Calu3 (cell line): ENCODE measurements at regions of chr16 and their contacts with region 1.

Region 1: DNA sequence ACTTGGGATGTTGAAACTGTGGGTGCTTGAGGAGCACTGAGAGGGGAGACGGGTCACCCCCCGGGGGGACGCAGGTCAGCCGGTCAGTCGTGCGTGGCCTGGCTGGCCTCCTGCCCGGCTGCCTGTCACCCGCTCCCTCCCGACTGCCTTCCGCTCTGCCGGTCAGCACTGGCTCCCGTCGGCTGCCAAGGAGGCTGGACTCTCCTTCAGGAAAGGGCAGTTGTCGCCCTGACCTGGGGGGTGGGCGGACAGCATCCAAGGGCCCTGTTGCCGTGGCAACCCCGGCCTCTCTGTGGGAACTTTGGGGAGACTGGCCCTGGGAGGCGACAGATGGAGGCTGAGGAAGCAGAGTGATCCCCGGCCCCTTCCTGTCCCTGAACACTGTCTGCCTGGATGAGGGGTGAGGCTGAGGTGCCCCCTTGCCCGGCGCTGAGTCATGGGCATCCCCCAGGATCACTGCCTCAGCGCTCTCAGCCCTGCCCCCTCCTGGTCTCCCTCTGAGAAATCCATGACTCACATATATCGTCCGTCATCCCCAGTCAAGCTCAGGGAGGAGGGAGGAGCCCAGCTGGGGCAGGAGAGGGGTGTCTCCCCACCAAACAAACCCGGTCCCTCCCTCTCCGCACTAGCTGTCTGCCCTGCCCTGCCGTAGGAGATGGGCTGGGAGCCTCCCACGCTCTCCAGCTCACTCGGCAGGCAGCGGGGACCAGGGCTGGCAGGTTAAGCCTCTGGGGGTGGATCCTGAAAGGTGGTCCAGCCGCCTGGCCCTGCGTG is at the start of gene ADGRG1:
- DNase-seq: peak; percentile 90
- H3K4me3 Mint-ChIP-seq: peak within 1 kb of the TSS; percentile 67
- H3K27ac Mint-ChIP-seq: peak within 1 kb of the TSS; percentile 73
- H3K4me1 Mint-ChIP-seq: peaks cover 74% of the 10 kb centered on the region
- H3K27me3 Mint-ChIP-seq: no peaks in the 10 kb centered on the region
- CTCF ChIP-seq: peak; percentile 30
- total RNA-seq, gene ADGRG1: 269 and 278 TPM in 2 replicates

Region 2: GRCh38 chr16:57383276-57384247 is 244.6 kb before region 1 on chr16:
- CTCF ChIA-PET with region 1: no interaction called
- intact Hi-C with region 1: no loop called
- DNase-seq: peak; percentile 49
- H3K4me3 Mint-ChIP-seq: no peak overlapping the region
- H3K27ac Mint-ChIP-seq: peak overlapping the region; percentile 32
- H3K4me1 Mint-ChIP-seq: peaks cover 66% of the 10 kb centered on the region
- H3K27me3 Mint-ChIP-seq: no peaks in the 10 kb centered on the region
- CTCF ChIP-seq: no peak

Region 3: GRCh38 chr16:57600048-57600835 is 28.0 kb before region 1 on chr16:
- CTCF ChIA-PET with region 1: interaction called, 10 read pairs
- intact Hi-C with region 1: loop called (anchors 1 kb)
- DNase-seq: peak; percentile 88
- H3K4me3 Mint-ChIP-seq: no peak overlapping the region
- H3K27ac Mint-ChIP-seq: no peak overlapping the region
- H3K4me1 Mint-ChIP-seq: no peaks in the 10 kb centered on the region
- H3K27me3 Mint-ChIP-seq: peaks cover 14% of the 10 kb centered on the region
- CTCF ChIP-seq: peak; percentile 94

Region 4: DNA sequence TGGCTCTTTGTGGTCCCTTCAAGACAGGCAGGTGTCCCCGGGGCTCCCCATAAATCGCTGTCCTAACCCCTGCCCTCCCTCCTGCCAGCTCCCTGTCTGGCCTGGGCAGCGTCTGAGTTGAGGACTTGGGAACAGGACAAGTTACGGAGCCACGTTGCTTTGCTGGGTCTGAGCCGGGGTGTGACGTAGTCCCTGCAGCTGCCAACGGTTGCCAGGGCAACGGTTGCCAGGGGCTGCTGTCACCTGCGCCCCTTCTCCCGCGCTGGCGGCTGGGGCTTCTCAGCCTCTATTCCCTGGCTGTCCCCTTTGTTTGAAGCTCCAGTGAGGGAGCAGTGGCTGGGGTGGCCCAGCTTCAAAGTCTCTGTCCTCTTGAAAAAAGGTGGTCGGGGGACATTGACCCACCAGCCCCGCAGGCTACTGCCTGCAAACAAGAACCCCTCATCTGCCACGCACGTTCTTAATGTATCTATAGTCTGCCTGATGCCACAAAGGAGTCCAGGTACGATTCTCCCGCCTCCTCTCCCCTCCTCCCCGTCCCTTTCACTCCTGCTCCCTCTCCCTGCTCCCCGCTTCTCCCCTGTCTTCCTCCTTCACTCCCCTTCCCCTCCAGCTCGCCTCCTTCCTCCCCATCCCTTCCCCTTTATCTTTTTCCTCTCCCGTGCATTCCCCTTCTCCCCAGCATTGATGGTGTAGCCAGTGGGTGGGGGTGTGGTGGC is 11.1 kb after region 1 on chr16:
- CTCF ChIA-PET with region 1: interaction called, 10 read pairs
- intact Hi-C with region 1: no loop called
- DNase-seq: no peak
- H3K4me3 Mint-ChIP-seq: no peak overlapping the region
- H3K27ac Mint-ChIP-seq: no peak overlapping the region
- H3K4me1 Mint-ChIP-seq: peaks cover 36% of the 10 kb centered on the region
- H3K27me3 Mint-ChIP-seq: no peaks in the 10 kb centered on the region
- CTCF ChIP-seq: no peak

Region 5: DNA sequence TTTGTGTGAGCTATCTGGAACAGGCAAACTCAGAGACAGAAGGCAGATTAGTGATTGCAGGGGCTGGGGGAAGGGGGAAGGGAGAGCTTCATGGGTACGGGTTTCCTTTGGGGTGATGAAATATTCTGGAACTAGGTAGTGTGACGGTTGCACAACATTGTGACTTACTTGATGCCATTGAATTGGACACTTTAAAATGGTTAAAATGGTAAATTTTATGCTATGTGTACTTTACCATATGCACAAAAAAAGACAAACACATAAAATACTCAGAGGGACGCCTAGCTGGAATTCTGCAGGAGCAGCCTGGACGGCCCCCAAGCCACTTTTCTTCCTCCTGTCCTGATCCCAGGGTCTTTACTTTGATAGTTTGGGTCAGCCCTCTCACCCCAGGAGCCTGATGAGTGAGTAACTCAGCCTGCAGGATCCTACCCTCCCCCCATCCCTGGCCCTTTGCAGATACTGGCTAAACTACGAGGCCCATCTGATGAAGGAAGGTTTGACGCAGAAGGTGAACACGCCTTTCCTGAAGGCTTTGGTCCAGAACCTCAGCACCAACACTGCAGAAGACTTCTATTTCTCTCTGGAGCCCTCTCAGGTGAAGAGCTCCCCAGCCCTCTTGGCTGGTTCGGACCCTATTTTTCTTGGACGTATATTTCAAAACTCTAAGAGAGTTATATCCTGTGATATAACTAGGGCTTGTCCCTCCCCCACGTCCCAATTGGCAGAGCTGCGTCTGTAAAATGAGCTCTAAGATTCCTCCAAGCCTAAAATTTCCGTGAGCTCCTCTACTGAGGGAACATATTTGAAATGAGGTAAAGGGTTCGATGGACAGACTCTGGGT is 47.8 kb after region 1 on chr16:
- CTCF ChIA-PET with region 1: no interaction called
- intact Hi-C with region 1: no loop called
- DNase-seq: no peak
- H3K4me3 Mint-ChIP-seq: no peak overlapping the region
- H3K27ac Mint-ChIP-seq: no peak overlapping the region
- H3K4me1 Mint-ChIP-seq: no peaks in the 10 kb centered on the region
- H3K27me3 Mint-ChIP-seq: peaks cover 80% of the 10 kb centered on the region
- CTCF ChIP-seq: no peak

Region 6: DNA sequence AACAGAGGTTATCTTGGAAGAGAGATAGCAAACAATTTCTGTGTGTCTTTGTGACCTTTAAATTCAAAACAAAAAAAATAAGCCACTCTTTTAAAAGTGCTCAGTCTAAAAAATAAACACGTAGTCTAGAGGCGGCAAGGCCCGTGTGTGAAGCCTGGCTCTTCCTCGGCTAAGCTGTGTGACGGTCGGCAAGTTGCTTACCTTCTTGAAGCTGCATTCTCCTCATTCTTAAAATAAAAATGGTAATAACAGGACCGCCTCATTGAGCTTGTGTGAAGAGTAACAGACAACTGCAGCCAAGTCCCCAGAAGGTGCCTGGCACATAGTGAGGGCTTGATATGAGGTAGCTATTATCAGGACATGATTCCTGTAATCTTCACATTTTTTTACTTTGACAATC is 162.2 kb after region 1 on chr16:
- CTCF ChIA-PET with region 1: interaction called, 10 read pairs
- intact Hi-C with region 1: no loop called
- DNase-seq: no peak
- H3K4me3 Mint-ChIP-seq: no peak overlapping the region
- H3K27ac Mint-ChIP-seq: no peak overlapping the region
- H3K4me1 Mint-ChIP-seq: no peaks in the 10 kb centered on the region
- H3K27me3 Mint-ChIP-seq: no peaks in the 10 kb centered on the region
- CTCF ChIP-seq: no peak